Heart right ventricle (tissue), 16 donors: ENCODE measurements at regions of chrX and their contacts with region 1.

Region 1: DNA sequence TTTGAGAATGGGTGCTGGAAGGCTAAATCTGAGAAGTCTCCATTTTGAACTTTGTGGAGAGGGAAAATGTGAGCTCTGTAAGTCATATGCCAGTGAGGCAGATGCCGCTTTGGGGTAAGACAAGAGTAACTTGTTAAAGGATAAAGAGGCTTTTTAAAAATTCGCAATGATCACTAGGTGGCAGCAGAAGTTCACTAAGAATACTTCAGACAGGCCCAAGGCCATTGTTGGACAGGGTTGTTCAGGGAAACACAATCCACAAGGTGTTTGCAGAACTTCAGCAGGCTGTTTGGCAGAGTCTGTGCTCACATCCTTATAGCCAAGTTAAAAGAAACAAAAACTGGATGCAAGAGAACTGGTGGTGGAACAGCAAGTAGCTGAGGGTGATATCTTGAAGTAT is 13.7 kb upstream of the PIGA start:
- DNase-seq: peak in 1 of 2 donors; percentile 32
- ATAC-seq: peak; percentile 67 to 89 (median 72)
- H3K4me3 ChIP-seq: no peak overlapping the region
- H3K27ac ChIP-seq: no peak overlapping the region
- H3K4me1 ChIP-seq: peaks cover 0 to 3% (median 0%) of the 10 kb centered on the region in 9 donors
- H3K27me3 ChIP-seq: peaks cover 0 to 33% (median 0%) of the 10 kb centered on the region in 7 donors
- CTCF ChIP-seq: peak; percentile 9 to 64 (median 58)

Region 2: DNA sequence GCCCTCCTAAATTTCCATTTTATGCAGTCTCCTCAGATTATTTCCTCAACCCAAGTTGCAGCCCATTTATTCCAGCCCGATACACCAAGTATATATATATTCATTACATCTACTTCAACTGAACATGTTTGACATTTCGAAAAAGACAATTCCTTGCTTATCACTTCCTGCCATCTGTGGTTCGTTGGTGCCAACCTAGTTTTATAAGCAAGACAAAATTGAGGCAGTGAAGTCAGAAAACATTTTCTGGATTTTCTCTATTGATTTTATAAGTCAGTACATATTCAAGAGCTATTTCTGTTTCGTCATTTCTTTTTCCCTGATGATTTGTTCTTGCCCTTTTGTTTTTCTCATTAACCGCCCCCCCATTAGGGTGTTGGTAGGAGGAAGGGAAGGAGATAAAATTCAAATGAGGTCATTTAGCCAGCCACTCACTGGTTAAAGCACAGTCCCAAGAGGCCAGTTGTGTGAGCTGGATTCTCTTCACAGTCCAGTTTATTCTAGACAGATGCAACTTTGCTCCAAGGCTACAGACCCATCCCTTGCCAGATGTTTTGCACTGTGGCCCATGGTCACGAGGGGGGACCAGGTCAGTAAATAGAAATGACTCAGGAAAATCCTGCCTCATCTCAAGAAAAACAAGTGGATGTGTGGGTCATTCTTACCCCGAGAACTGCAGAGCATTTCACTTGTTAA is 55.5 kb after region 1 on chrX:
- intact Hi-C with region 1: loop called in 1 of 10 experiments (anchors 10 kb)
- DNase-seq: peak; percentile 25 to 70
- ATAC-seq: peak; percentile 69 to 94 (median 88)
- H3K4me3 ChIP-seq: no peak overlapping the region
- H3K27ac ChIP-seq: peak overlapping the region in 8 of 10 donors; percentile 22 to 64 (median 45)
- H3K4me1 ChIP-seq: peaks cover 0 to 52% (median 15%) of the 10 kb centered on the region in 9 donors
- H3K27me3 ChIP-seq: peaks cover 0 to 64% (median 0%) of the 10 kb centered on the region in 7 donors
- CTCF ChIP-seq: no peak

Region 3: GRCh38 chrX:15471016-15471415 is 122.0 kb after region 1 on chrX:
- intact Hi-C with region 1: loop called in 9 of 10 experiments (anchors 2 to 10 kb)
- DNase-seq: peak; percentile 18 to 38
- ATAC-seq: peak in 7 of 8 donors; percentile 65 to 78 (median 73)
- H3K4me3 ChIP-seq: no peak overlapping the region
- H3K27ac ChIP-seq: no peak overlapping the region
- H3K4me1 ChIP-seq: peaks cover 0 to 9% (median 0%) of the 10 kb centered on the region in 9 donors
- H3K27me3 ChIP-seq: peaks cover 0 to 48% (median 0%) of the 10 kb centered on the region in 7 donors
- CTCF ChIP-seq: peak; percentile 48 to 84 (median 73)

Region 4: DNA sequence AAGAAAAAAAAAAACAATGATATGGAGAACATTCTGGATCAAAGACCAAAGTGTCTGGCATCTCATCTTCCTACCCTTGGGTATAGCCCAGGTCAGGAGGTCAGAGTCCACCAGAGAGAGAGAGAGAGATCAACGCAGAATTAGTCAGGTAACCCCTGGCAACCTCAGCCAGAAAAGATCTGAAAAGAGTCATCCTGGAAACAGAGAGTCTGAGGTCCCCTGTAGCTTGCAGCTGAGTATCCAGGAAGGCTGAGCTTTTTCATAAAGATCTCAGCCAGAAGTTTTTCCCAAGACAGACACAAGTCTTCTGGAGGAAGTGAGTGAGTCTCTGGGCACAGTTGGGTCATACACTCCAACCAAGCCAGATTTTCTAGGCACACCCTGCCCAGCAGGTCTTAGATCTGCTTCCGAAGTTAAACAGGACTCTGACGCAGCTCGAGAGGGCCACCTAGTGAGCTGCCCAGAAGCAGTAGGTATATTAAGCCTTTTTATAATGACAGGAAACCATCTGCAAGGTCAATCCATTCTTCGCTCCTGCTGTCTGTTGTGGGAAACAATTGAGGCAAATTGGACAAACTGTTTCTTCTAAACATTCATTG is 216.0 kb after region 1 on chrX:
- intact Hi-C with region 1: loop called in 3 of 10 experiments (anchors 5 to 10 kb)
- DNase-seq: peak; percentile 29 to 41
- ATAC-seq: peak; percentile 70 to 92 (median 82)
- H3K4me3 ChIP-seq: no peak overlapping the region
- H3K27ac ChIP-seq: no peak overlapping the region
- H3K4me1 ChIP-seq: peaks cover 0 to 8% (median 0%) of the 10 kb centered on the region in 9 donors
- H3K27me3 ChIP-seq: peaks cover 0 to 85% (median 0%) of the 10 kb centered on the region in 7 donors
- CTCF ChIP-seq: peak in 8 of 9 donors; percentile 18 to 68 (median 58)

Region 5: GRCh38 chrX:15579778-15580747 is 231.0 kb after region 1 on chrX:
- intact Hi-C with region 1: loop called in 1 of 10 experiments (anchors 10 kb)
- DNase-seq: peak; percentile 31 to 37
- ATAC-seq: peak; percentile 73 to 96 (median 87)
- H3K4me3 ChIP-seq: no peak overlapping the region
- H3K27ac ChIP-seq: peak overlapping the region in 6 of 10 donors; percentile 25 to 70 (median 52)
- H3K4me1 ChIP-seq: peaks cover 0 to 21% (median 2%) of the 10 kb centered on the region in 9 donors
- H3K27me3 ChIP-seq: peaks cover 0 to 74% (median 0%) of the 10 kb centered on the region in 7 donors
- CTCF ChIP-seq: no peak

Region 6: GRCh38 chrX:15645258-15645657 is 296.2 kb after region 1 on chrX:
- intact Hi-C with region 1: loop called in 1 of 10 experiments (anchors 10 kb)
- DNase-seq: no peak
- ATAC-seq: no peak
- H3K4me3 ChIP-seq: no peak overlapping the region
- H3K27ac ChIP-seq: no peak overlapping the region
- H3K4me1 ChIP-seq: no peaks in the 10 kb centered on the region
- H3K27me3 ChIP-seq: peaks cover 0 to 73% (median 0%) of the 10 kb centered on the region in 7 donors
- CTCF ChIP-seq: no peak

Region 7: GRCh38 chrX:16267431-16267830 is 918.4 kb after region 1 on chrX:
- intact Hi-C with region 1: no loop called
- DNase-seq: no peak
- ATAC-seq: no peak
- H3K4me3 ChIP-seq: no peak overlapping the region
- H3K27ac ChIP-seq: no peak overlapping the region
- H3K4me1 ChIP-seq: no peaks in the 10 kb centered on the region
- H3K27me3 ChIP-seq: peaks cover 0 to 14% (median 0%) of the 10 kb centered on the region in 7 donors
- CTCF ChIP-seq: no peak